BJ (cell line): ENCODE measurements at regions of chr6 and their contacts with region 1.

Region 1: DNA sequence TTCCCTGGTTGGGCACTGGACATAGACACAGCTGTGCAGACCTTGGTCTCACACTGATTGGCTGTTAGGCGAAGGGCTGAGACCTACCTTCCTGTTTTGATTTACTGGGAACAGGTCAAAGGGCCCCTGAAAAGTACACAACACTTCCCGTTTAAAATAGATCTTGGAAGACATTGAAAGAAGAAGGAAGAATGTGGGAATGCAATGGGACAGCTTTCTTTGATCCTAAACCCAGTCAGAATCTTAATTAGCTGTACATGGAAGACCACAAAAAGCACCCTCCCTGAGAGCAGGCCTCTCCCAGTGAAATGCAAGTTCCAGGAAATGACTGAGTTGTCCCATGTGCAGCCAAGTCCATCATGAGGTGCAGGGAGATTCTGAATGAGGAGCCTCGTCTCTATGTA is 83.6 kb upstream of the EXOC2 start:
- DNase-seq: no peak
- H3K4me3 ChIP-seq: no peak overlapping the region
- H3K27me3 ChIP-seq: peaks cover 1% of the 10 kb centered on the region; the same call in 1 of the 2 replicates
- CTCF ChIP-seq: no peak

Region 2: GRCh38 chr6:760982-761955 is 15.3 kb before region 1 on chr6:
- CTCF ChIA-PET with region 1: no interaction called
- POLR2A ChIA-PET with region 1: interaction called, 10 read pairs
- DNase-seq: no peak
- H3K4me3 ChIP-seq: peak overlapping the region; percentile 38
- H3K27me3 ChIP-seq: peaks cover 2% of the 10 kb centered on the region; the same call in 1 of the 2 replicates
- CTCF ChIP-seq: peak; percentile 30

Region 3: GRCh38 chr6:906920-907319 is 130.4 kb after region 1 on chr6:
- CTCF ChIA-PET with region 1: no interaction called
- POLR2A ChIA-PET with region 1: no interaction called
- DNase-seq: no peak
- H3K4me3 ChIP-seq: no peak overlapping the region
- H3K27me3 ChIP-seq: peaks cover 6% of the 10 kb centered on the region
- CTCF ChIP-seq: no peak